Right ventricle myocardium inferior (tissue), 1 donor: ENCODE measurements at regions of chr17 and their contacts with region 1.

Region 1: DNA sequence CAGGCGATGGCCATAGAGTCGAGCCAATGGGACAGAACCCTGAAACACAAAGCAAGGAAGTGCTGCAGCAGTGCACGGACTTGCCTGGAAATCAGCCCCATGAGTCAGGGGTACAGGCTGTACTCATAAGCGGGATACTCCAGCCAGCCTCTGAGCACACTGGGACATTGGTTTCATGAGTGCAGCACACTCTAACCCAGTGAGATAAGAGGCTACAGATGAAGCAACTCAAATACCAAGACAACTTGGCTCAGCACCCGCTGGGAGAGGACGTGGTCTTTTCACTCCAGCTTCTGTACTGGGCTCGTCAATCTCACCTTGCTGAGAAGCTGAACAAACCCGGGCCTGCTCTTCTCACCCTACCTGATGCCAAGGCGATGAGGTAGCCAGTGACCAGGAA is 98.2 kb downstream of the AXIN2 start:
- DNase-seq: peak; percentile 85
- ATAC-seq: peak; percentile 98

Region 2: GRCh38 chr17:65219124-65219523 is 244.1 kb before region 1 on chr17:
- intact Hi-C with region 1: no loop called
- DNase-seq: no peak
- ATAC-seq: no peak

Region 3: GRCh38 chr17:65485376-65486299 is 22.4 kb after region 1 on chr17:
- intact Hi-C with region 1: loop called (anchors 2 kb)
- DNase-seq: peak; percentile 76
- ATAC-seq: peak; percentile 86

Region 4: DNA sequence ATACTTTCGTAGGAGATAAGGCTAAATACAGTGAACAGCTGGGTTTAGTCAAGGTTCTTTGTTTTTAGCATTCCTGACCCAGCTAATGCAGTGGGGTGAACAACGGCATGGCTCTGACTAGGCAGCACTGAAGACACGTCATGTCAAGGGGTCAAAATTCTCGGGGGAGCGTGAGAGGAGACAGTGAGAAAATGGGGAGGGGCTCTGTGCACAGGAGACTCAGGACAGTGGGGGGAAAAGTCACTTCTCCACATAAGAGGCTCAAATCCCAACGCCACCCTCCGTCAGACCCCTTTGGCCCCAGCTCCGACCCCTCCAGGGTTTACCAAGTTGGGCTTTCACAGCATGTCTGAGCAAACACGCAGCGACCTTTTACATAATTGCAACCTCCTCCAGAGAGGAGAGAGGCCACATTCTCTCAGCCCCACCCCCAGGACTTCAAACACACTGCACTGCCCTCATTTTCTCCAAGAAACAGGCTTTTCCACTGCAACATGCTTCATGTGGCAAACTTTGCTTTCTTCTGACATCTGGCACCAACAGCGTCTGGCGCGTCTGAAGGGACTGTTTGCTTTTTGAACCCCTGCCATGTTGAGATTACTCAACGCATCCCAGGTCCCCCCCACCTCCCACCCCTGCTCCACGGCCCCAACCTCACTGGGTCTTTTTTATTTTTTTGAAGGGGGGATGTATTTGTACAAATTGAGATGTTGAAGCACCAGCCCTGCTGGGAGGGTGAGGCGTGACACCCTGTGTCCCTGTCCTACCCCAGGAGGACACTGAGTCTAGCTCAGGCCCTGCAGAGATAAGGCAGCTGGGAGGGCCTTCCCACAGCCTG is 68.2 kb after region 1 on chr17:
- intact Hi-C with region 1: loop called (anchors 5 kb)
- DNase-seq: peak; percentile 68
- ATAC-seq: peak; percentile 87

Region 5: GRCh38 chr17:65547253-65547670 is 84.0 kb after region 1 on chr17:
- intact Hi-C with region 1: loop called (anchors 2 kb)
- DNase-seq: no peak
- ATAC-seq: peak; percentile 64

Region 6: GRCh38 chr17:65556014-65556909 is 93.0 kb after region 1 on chr17:
- intact Hi-C with region 1: loop called (anchors 1 kb)
- DNase-seq: peak; percentile 88
- ATAC-seq: peak; percentile 15

Region 7: DNA sequence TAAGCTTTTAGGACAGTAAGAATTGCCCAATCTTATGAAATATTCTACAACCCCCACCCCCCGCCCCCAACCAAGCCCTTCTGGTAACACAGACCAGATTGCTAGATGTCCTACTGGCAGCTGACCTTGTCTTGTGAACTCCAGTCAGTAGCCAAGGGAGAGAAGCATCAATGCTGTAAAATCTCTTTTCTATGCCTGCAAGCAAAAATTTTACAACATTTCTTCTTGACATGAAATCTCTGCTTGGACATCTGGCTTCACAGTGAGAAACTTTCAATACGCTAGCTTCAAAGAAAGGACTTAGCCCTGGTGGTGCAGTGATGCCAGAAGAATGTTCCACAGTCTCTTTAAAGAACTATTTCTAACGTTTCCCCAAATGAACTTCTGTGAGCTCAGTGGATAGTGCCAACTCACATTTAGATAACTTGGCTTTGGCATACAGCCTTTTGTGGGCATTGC is 267.5 kb after region 1 on chr17:
- intact Hi-C with region 1: loop called (anchors 5 kb)
- DNase-seq: no peak
- ATAC-seq: peak; percentile 72

Region 8: GRCh38 chr17:65931246-65932149 is 468.3 kb after region 1 on chr17:
- intact Hi-C with region 1: loop called (anchors 5 kb)
- DNase-seq: peak; percentile 65
- ATAC-seq: peak; percentile 97